Left colon (tissue), 2 donors: ENCODE measurements at regions of chr9 and their contacts with region 1.

Region 1: DNA sequence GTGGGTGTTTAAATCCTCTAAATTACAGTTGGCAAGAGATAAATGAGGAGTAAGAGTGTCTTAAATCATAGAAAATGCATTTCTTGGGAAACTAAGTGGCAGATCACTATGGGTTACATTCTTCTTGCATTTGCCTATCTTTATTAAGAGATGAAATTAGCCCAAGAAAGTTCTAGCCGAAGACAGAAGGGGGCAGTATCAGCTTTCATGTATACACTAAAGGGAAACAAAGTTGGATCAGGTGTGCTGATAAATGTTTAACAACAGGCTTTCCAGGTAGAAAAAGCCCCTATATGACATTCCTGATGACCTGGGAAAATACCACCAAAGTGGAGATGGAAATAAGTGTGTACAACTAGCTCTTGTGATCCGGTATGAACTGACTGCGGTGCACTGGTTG is 81.9 kb upstream of the TLR4 start:
- DNase-seq: no peak
- ATAC-seq: no peak

Region 2: DNA sequence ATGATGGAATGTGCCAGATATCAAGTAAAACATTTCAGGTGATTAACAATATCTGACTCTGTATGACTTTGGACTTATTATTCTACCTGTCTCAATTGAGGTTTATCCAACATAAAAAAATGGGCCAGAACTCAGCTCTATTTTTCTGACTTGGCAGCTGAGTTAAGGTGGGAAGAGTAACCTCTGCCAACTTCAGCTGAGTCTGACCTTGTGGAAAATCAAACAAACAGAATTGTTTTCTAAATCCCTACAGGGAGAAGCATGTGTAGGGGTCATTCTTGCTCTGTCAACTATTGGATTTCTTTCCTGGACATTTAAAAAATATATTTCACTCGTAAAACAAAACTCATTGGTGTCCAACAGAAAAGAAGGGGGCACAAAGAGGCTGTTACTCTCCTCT is 57.5 kb before region 1 on chr9:
- intact Hi-C with region 1: loop called in 1 of 2 experiments (anchors 10 kb)
- DNase-seq: no peak
- ATAC-seq: no peak

Region 3: GRCh38 chr9:117704024-117704575 is 81.8 kb after region 1 on chr9 and contains the start of gene TLR4:
- intact Hi-C with region 1: no loop called
- DNase-seq: peak; percentile 69 to 71
- ATAC-seq: peak; percentile 92
- total RNA-seq, gene TLR4: 6.0 to 12.8 TPM